H1 (cell line): ENCODE measurements at regions of chr12 and their contacts with region 1.

Region 1: GRCh38 chr12:127381048-127381668 is 885.8 kb upstream of the TMEM132C start:
- DNase-seq: peak; percentile 21 to 90
- H3K4me3 ChIP-seq: peak overlapping the region in 1 of 4 experiments; percentile 48; a peak in 4 of 8 replicates
- H3K27ac ChIP-seq: no peak overlapping the region
- H3K4me1 ChIP-seq: no peaks in the 10 kb centered on the region
- H3K27me3 ChIP-seq: no peaks in the 10 kb centered on the region
- CTCF ChIP-seq: peak; percentile 82 to 93 (median 89)
- EP300 ChIP-seq: peak in 1 of 2 experiments; percentile 15; a peak in 1 of 3 replicates
- POLR2A ChIP-seq: no peak
- RAD21 ChIP-seq: peak; percentile 93 to 96

Region 2: GRCh38 chr12:127355061-127355841 is 25.9 kb before region 1 on chr12:
- CTCF ChIA-PET with region 1: interaction called, 11 read pairs
- POLR2A ChIA-PET with region 1: no interaction called
- DNase-seq: peak in 1 of 2 experiments; percentile 53
- H3K4me3 ChIP-seq: no peak overlapping the region
- H3K27ac ChIP-seq: no peak overlapping the region
- H3K4me1 ChIP-seq: no peaks in the 10 kb centered on the region; a peak in 1 of 7 replicates
- H3K27me3 ChIP-seq: no peaks in the 10 kb centered on the region
- CTCF ChIP-seq: peak; percentile 76 to 83 (median 77)
- EP300 ChIP-seq: no peak
- POLR2A ChIP-seq: no peak
- RAD21 ChIP-seq: peak; percentile 76 to 81

Region 3: GRCh38 chr12:127363392-127363791 is 17.8 kb before region 1 on chr12:
- CTCF ChIA-PET with region 1: interaction called, 16 read pairs
- POLR2A ChIA-PET with region 1: no interaction called
- DNase-seq: peak in 1 of 2 experiments; percentile 60
- H3K4me3 ChIP-seq: no peak overlapping the region
- H3K27ac ChIP-seq: no peak overlapping the region
- H3K4me1 ChIP-seq: no peaks in the 10 kb centered on the region
- H3K27me3 ChIP-seq: no peaks in the 10 kb centered on the region
- CTCF ChIP-seq: peak in 2 of 3 experiments; percentile 65 to 70; a peak in 3 of 4 replicates
- EP300 ChIP-seq: no peak
- POLR2A ChIP-seq: no peak
- RAD21 ChIP-seq: peak; percentile 73 to 82